ENCODE measurements at regions of chr2 and their contacts with region 1.

Region 1: GRCh38 chr2:176468457-176469113 is 199.3 kb downstream of the MTX2 start:
- DNase-seq: no peak
- H3K4me3 ChIP-seq: no peak overlapping the region
- H3K27ac ChIP-seq: no peak overlapping the region
- H3K4me1 ChIP-seq: peaks cover 0 to 15% (median 11%) of the 10 kb centered on the region in 6 donors
- H3K27me3 ChIP-seq: peaks cover 0 to 14% (median 0%) of the 10 kb centered on the region in 7 donors
- CTCF ChIP-seq: no peak
- POLR2A ChIP-seq: no peak

Region 2: DNA sequence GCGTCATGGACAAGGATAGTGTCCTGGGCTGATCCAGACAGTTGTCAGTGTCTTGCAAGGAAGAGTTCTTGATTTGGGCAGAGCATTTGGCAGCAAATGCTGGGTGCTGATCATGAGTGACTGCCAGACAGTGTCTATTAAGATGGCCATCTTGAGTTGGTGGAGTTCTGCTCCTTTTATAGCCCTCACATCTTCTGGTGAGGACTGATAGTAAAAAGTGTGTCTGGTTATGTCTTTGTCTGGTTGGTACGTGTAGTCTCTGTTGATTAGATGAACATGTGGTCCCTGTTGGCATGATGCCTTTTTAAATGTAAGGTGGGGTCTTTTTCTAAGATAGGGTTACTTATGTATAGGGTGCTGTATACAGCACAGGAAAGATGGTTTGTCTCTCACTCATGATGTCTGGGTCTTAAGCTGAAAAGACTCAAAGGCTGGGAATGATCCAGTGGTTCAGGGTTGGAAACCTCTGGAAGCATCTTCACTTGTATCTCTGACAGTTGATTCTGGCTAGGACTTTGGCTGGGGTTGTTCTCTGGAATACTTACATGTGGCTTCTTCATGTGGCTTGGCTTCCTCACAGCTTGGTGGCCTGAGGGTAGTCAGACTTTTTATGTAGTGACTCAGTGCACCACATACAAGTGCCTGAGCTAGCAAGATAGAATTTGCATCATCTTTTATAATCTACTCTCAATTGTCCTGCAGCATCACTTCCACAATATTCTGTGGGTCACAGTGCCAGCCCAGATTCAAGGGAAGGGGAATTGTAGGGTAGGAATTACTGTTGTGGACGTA is 187.5 kb before region 1 on chr2:
- intact Hi-C with region 1: no loop called
- DNase-seq: no peak
- H3K4me3 ChIP-seq: no peak overlapping the region
- H3K27ac ChIP-seq: no peak overlapping the region
- H3K4me1 ChIP-seq: peaks cover 0 to 5% (median 2%) of the 10 kb centered on the region in 6 donors
- H3K27me3 ChIP-seq: no peaks in the 10 kb centered on the region
- CTCF ChIP-seq: no peak
- POLR2A ChIP-seq: no peak

Region 3: DNA sequence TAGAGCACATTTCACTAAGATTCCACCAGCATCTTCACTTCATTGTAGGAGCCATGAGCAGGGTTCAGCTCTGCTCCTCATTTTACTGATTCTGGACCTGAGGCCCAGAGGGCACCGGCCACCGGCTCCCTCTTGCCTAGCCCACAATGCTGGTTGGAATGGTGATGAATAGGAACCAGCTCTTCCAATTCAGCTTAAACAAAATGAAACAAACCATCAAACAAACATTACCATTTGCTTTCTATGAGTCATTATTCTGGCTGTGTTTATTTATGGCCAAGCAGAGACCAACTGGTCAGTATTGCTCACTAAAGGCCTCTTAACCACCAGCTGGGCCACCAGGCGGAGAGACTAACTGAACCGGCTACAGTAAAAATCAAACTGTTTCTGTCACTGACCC is 22.6 kb before region 1 on chr2:
- intact Hi-C with region 1: loop called (anchors 2 kb)
- DNase-seq: no peak
- H3K4me3 ChIP-seq: no peak overlapping the region
- H3K27ac ChIP-seq: peak overlapping the region in 1 of 8 donors; percentile 49
- H3K4me1 ChIP-seq: no peaks in the 10 kb centered on the region
- H3K27me3 ChIP-seq: no peaks in the 10 kb centered on the region
- CTCF ChIP-seq: no peak
- POLR2A ChIP-seq: no peak